CD14-positive monocyte (primary cell): ENCODE measurements at regions of chr16 and their contacts with region 1.

Region 1: DNA sequence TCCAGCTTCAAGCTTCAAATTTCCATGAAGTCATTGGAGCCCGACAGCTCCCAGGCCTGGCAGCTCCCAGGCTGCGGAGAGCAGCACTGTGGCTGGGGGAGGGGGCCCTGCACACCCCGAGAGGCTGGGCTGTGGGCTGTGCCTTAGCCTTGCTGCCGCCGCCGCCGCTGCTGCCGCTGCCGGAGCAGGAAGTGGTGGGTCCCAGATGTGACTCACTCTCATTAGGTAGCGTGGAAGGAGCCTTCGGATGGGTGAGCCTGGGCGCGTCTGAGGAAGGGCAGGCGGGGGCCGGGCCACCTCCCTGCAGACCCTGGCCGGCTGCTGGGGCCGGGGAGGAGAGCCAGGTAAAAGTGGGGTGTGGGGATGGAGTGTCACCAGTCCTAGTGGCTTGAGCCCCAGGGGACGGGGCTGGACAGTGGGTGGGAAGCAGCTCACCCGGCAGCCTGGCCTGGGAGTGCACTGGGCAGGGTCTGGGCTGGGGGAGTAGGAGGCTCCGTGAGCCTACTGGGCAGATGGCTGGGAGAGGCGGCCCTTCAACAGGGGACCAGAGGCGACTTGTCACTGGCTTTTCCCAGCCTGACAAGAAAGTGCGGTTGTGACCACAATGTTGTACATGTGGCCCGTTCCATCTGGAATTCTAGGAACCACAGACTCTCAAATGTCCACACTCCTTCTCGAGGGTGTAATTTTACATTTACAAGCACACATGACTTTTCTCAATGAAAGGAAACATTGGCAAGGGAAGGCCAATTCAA is at the start of gene ADCY7:
- DNase-seq: peak; percentile 77 to 88 (median 85)
- H3K4me3 ChIP-seq: peak within 1 kb of the TSS; percentile 40 to 80 (median 62)
- H3K4me3 Mint-ChIP-seq: peak within 1 kb of the TSS; percentile 72 to 89
- H3K27ac ChIP-seq: peak within 1 kb of the TSS; percentile 53 to 97
- H3K27ac Mint-ChIP-seq: peak within 1 kb of the TSS; percentile 85 to 97 (median 90)
- H3K4me1 ChIP-seq: peaks cover 75 to 83% of the 10 kb centered on the region in 2 donors
- H3K4me1 Mint-ChIP-seq: peaks cover 86% of the 10 kb centered on the region
- H3K27me3 ChIP-seq: no peaks in the 10 kb centered on the region
- H3K27me3 Mint-ChIP-seq: peaks cover 0 to 6% (median 0%) of the 10 kb centered on the region in 3 donors
- CTCF ChIP-seq: no peak
- polyA plus RNA-seq, gene ADCY7: 53.1 to 230 (median 91.5) TPM

Region 2: GRCh38 chr16:50038756-50039529 is 227.6 kb before region 1 on chr16:
- intact Hi-C with region 1: loop called in 1 of 2 experiments (anchors 10 kb)
- DNase-seq: peak; percentile 90 to 95 (median 92)
- H3K4me3 ChIP-seq: peak overlapping the region in 1 of 3 experiments; percentile 62
- H3K4me3 Mint-ChIP-seq: peak overlapping the region; percentile 32 to 77
- H3K27ac ChIP-seq: peak overlapping the region; percentile 78 to 81
- H3K27ac Mint-ChIP-seq: peak overlapping the region; percentile 93 to 99 (median 97)
- H3K4me1 ChIP-seq: peaks cover 44 to 48% of the 10 kb centered on the region in 2 donors
- H3K4me1 Mint-ChIP-seq: peaks cover 44% of the 10 kb centered on the region
- H3K27me3 ChIP-seq: no peaks in the 10 kb centered on the region
- H3K27me3 Mint-ChIP-seq: peaks cover 0 to 2% (median 0%) of the 10 kb centered on the region in 3 donors
- CTCF ChIP-seq: no peak

Region 3: GRCh38 chr16:50281964-50282538 is 15.5 kb after region 1 on chr16:
- intact Hi-C with region 1: loop called (anchors 1 kb)
- DNase-seq: peak; percentile 94 to 97 (median 94)
- H3K4me3 ChIP-seq: peak overlapping the region; percentile 41 to 86 (median 55)
- H3K4me3 Mint-ChIP-seq: peak overlapping the region; percentile 74 to 90
- H3K27ac ChIP-seq: peak overlapping the region; percentile 86 to 97
- H3K27ac Mint-ChIP-seq: peak overlapping the region; percentile 93 to 100 (median 98)
- H3K4me1 ChIP-seq: peaks cover 88 to 92% of the 10 kb centered on the region in 2 donors
- H3K4me1 Mint-ChIP-seq: peaks cover 85% of the 10 kb centered on the region
- H3K27me3 ChIP-seq: no peaks in the 10 kb centered on the region
- H3K27me3 Mint-ChIP-seq: no peaks in the 10 kb centered on the region
- CTCF ChIP-seq: no peak